ENCODE measurements at regions of chr14 and their contacts with region 1.

Region 1: GRCh38 chr14:84403572-84403971 is 1126.4 kb upstream of the FLRT2 start:
- DNase-seq: no peak
- ATAC-seq: no peak
- H3K4me3 ChIP-seq: no peak overlapping the region
- H3K27ac ChIP-seq: no peak overlapping the region
- H3K4me1 ChIP-seq: no peaks in the 10 kb centered on the region
- H3K27me3 ChIP-seq: no peaks in the 10 kb centered on the region
- CTCF ChIP-seq: no peak

Region 2: GRCh38 chr14:84323978-84324377 is 79.6 kb before region 1 on chr14:
- CTCF ChIA-PET with region 1: no interaction called
- POLR2A ChIA-PET with region 1: interaction called, 15 read pairs
- in situ Hi-C with region 1: no loop called
- intact Hi-C with region 1: no loop called
- DNase-seq: no peak
- ATAC-seq: no peak
- H3K4me3 ChIP-seq: no peak overlapping the region
- H3K27ac ChIP-seq: no peak overlapping the region
- H3K4me1 ChIP-seq: no peaks in the 10 kb centered on the region
- H3K27me3 ChIP-seq: no peaks in the 10 kb centered on the region
- CTCF ChIP-seq: no peak

Region 3: GRCh38 chr14:84390010-84390409 is 13.6 kb before region 1 on chr14:
- CTCF ChIA-PET with region 1: no interaction called
- POLR2A ChIA-PET with region 1: no interaction called
- in situ Hi-C with region 1: no loop called
- intact Hi-C with region 1: no loop called
- DNase-seq: no peak
- ATAC-seq: no peak
- H3K4me3 ChIP-seq: no peak overlapping the region
- H3K27ac ChIP-seq: no peak overlapping the region
- H3K4me1 ChIP-seq: no peaks in the 10 kb centered on the region
- H3K27me3 ChIP-seq: no peaks in the 10 kb centered on the region
- CTCF ChIP-seq: no peak

Measured in Panc1 (cell line).